Activated CD4-positive, alpha-beta memory T cell treated with anti-CD3 and anti-CD28 coated beads, Interleukin-2, amount 10 ng/mL, durations not matched to agents 7 days and 5 days (primary cell): ENCODE measurements at regions of chr1 and their contacts with region 1.

Region 1: DNA sequence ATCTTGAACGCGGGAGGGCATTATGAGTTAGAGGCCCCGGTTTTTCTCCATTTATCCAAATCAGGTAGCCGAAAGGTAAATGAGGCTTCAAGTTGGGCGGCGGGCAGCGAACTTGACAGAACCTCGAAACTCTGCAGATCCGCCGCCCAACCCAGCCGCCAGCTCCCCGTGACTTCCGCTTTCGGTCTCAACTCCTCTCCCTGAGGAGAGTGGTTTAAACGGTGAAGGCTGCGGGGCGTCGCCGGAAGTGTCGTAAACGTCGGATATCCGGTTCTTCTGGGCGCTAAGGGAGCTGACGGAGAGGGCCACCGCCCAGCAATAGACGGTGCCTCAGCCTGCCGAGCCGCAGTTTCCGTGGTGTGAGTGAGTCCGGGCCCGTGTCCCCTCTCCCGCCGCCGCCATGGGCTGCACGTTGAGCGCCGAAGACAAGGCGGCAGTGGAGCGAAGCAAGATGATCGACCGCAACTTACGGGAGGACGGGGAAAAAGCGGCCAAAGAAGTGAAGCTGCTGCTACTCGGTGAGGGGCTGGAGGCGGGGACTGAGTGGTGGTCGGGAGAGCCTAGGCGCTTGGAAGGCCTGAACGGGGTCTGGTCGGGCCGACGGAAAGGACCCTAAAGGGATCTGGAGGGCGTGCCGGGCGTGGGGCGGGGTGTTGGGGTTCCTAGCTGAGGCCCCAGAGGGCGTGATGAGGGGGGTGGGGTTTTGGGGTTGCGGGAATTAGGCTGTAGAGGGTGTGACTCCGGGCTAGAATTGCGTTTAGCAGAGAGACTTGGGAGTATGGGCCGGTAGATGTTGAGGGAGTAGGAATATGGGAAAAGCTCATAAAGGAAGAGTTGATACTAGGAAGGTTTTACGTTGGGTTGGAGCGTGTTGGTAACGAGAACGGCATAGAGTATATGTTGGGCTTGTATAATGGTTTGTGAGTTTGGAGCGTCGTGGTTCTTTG is at the start of gene GNAI3:
- DNase-seq: peak; percentile 98
- H3K4me3 Mint-ChIP-seq: peak within 1 kb of the TSS; percentile 94
- H3K27ac Mint-ChIP-seq: peak within 1 kb of the TSS; percentile 99
- H3K4me1 Mint-ChIP-seq: peaks cover 46% of the 10 kb centered on the region
- H3K27me3 Mint-ChIP-seq: no peaks in the 10 kb centered on the region
- total RNA-seq, gene GNAI3: 9.4 to 9.6 TPM

Region 2: GRCh38 chr1:109412551-109412950 is 136.0 kb before region 1 on chr1:
- CTCF ChIA-PET with region 1: no interaction called
- POLR2A ChIA-PET with region 1: no interaction called
- DNase-seq: no peak
- H3K4me3 Mint-ChIP-seq: no peak overlapping the region
- H3K27ac Mint-ChIP-seq: no peak overlapping the region
- H3K4me1 Mint-ChIP-seq: peaks cover 12% of the 10 kb centered on the region
- H3K27me3 Mint-ChIP-seq: no peaks in the 10 kb centered on the region

Region 3: DNA sequence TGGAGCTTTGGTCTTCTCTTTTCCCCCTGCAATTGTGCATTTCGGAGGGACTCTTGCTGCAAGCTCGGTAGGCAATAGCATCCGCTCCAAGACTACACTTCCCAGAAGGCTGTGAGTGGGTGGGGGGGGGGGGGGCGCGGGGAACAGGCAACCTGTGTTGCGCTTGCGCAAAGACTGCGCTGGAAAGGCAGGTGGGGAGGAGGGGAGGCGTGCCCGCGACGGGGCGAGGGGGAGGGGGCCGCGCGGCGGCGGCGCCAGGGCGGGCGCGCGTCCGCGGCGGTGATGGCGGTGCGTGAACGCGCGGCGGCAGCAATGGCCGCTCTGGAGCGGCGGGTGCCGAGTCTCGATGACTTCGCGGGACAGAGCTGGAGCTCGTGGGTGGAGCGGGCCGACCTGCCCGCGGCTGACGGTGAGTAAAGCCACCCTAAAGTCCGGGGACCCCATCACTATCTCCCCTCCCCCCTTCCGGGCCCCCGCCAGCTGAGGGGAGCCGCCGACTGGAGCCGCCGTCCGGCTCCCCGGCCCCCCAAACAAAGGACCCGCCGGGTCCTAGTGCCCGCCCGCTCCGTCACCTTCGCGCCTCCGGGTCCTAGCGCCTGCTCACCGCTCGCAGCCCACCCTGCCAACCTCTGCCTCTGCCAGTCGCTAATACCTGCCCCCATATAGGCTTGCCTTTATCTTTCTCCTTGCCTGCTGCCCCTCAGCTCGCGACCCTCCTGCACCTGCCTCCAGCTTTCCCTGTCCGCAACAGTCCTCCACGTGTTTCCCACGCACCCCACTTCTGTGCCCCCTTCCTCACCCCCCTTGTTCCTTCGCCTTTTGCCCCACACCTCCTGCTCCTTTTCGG is 64.7 kb before region 1 on chr1 and contains the start of gene ATXN7L2:
- CTCF ChIA-PET with region 1: interaction called, 779 read pairs
- POLR2A ChIA-PET with region 1: interaction called, 18 read pairs
- DNase-seq: peak; percentile 94
- H3K4me3 Mint-ChIP-seq: peak within 1 kb of the TSS; percentile 93
- H3K27ac Mint-ChIP-seq: peak within 1 kb of the TSS; percentile 79
- H3K4me1 Mint-ChIP-seq: peaks cover 36% of the 10 kb centered on the region
- H3K27me3 Mint-ChIP-seq: peaks cover 17% of the 10 kb centered on the region
- total RNA-seq, gene ATXN7L2: 7.0 to 7.6 TPM

Region 4: DNA sequence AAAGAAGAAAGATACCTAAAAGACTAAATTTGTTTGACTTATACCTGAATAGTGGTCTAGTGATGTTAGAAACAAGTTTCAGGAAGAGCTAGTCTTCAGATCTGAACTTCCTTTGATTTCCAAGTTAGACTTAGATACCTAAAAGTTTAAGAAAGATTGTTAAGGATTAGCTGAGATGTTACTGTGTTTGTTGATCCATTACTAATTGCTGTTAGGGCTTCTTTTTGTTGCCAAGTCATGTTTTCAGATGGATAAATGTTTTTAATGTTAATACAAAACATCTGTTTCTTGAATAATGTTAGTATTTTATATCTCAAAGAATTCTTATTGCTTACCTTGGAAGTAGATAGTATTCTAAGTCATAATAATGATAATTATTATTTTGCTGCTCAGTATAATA is 11.4 kb after region 1 on chr1:
- CTCF ChIA-PET with region 1: interaction called, 12 read pairs
- POLR2A ChIA-PET with region 1: interaction called, 26 read pairs
- DNase-seq: no peak
- H3K4me3 Mint-ChIP-seq: no peak overlapping the region
- H3K27ac Mint-ChIP-seq: no peak overlapping the region
- H3K4me1 Mint-ChIP-seq: peaks cover 33% of the 10 kb centered on the region
- H3K27me3 Mint-ChIP-seq: no peaks in the 10 kb centered on the region

Region 5: DNA sequence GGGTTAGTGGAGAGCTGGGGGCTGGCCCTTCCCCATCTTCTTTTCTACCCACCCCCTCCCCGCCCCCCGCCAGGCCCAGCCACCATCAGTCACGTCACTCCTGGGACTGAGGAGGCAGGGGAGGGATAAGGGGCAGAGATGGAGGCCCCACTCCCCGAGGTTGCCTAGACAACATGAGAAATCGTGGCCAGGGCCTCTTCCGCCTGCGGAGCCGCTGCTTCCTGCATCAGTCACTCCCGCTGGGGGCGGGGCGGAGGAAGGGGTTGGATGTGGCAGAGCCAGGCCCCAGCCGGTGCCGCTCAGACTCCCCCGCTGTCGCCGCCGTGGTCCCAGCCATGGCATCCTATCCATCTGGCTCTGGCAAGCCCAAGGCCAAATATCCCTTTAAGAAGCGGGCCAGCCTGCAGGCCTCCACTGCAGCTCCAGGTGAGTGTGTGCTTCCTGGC is 72.3 kb after region 1 on chr1:
- CTCF ChIA-PET with region 1: interaction called, 17 read pairs
- POLR2A ChIA-PET with region 1: interaction called, 106 read pairs
- DNase-seq: peak; percentile 97
- H3K4me3 Mint-ChIP-seq: peak overlapping the region; percentile 97
- H3K27ac Mint-ChIP-seq: peak overlapping the region; percentile 93
- H3K4me1 Mint-ChIP-seq: peaks cover 77% of the 10 kb centered on the region
- H3K27me3 Mint-ChIP-seq: no peaks in the 10 kb centered on the region

Region 6: GRCh38 chr1:109643385-109644230 is 95.0 kb after region 1 on chr1:
- CTCF ChIA-PET with region 1: interaction called, 101 read pairs
- POLR2A ChIA-PET with region 1: interaction called, 30 read pairs
- DNase-seq: peak; percentile 88
- H3K4me3 Mint-ChIP-seq: no peak overlapping the region
- H3K27ac Mint-ChIP-seq: no peak overlapping the region
- H3K4me1 Mint-ChIP-seq: peaks cover 18% of the 10 kb centered on the region
- H3K27me3 Mint-ChIP-seq: peaks cover 7% of the 10 kb centered on the region

Region 7: GRCh38 chr1:109802901-109803561 is 254.4 kb after region 1 on chr1:
- CTCF ChIA-PET with region 1: no interaction called
- POLR2A ChIA-PET with region 1: interaction called, 15 read pairs
- DNase-seq: no peak
- H3K4me3 Mint-ChIP-seq: peak overlapping the region; percentile 66
- H3K27ac Mint-ChIP-seq: peak overlapping the region; percentile 100
- H3K4me1 Mint-ChIP-seq: peaks cover 89% of the 10 kb centered on the region
- H3K27me3 Mint-ChIP-seq: no peaks in the 10 kb centered on the region

Region 8: GRCh38 chr1:110338886-110339406 is 790.4 kb after region 1 on chr1 and contains the start of gene RBM15:
- CTCF ChIA-PET with region 1: interaction called, 4 read pairs
- POLR2A ChIA-PET with region 1: interaction called, 11 read pairs
- DNase-seq: peak; percentile 98
- H3K4me3 Mint-ChIP-seq: no peak within 1 kb of the TSS
- H3K27ac Mint-ChIP-seq: no peak within 1 kb of the TSS
- H3K4me1 Mint-ChIP-seq: peaks cover 60% of the 10 kb centered on the region
- H3K27me3 Mint-ChIP-seq: no peaks in the 10 kb centered on the region
- total RNA-seq, gene RBM15: 63.4 to 68.1 TPM